CD4-positive, alpha-beta memory T cell (primary cell): ENCODE measurements at regions of chr3 and their contacts with region 1.

Region 1: DNA sequence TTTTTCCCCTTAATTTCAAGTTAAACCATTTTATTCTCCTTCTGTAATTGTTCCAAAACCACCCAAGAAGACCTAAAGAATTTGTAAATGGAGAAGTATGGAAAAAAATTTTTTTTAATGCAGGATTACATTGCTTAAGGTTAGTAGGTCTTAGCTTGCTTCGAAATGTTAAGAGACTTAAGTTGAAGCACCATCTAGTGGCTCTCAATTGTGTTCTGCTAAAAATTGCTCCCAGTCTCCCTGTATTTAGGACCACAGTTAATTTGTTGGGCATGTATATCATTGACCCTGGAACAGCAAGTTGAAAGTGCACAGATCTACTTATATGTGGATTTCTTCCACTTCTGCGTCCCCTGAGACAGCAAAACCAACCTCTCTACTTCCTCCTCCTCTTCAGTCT is 32.4 kb downstream of the CD200R1L start:
- DNase-seq: peak in 2 of 5 donors; percentile 9 to 13
- H3K4me3 ChIP-seq: no peak overlapping the region
- H3K4me3 Mint-ChIP-seq: peak overlapping the region in 1 of 8 donors; percentile 61
- H3K27ac ChIP-seq: no peak overlapping the region
- H3K27ac Mint-ChIP-seq: peak overlapping the region in 1 of 7 donors; percentile 68
- H3K4me1 ChIP-seq: peaks cover 27% of the 10 kb centered on the region
- H3K4me1 Mint-ChIP-seq: peaks cover 18 to 44% (median 32%) of the 10 kb centered on the region in 4 donors
- H3K27me3 ChIP-seq: no peaks in the 10 kb centered on the region
- H3K27me3 Mint-ChIP-seq: no peaks in the 10 kb centered on the region

Region 2: DNA sequence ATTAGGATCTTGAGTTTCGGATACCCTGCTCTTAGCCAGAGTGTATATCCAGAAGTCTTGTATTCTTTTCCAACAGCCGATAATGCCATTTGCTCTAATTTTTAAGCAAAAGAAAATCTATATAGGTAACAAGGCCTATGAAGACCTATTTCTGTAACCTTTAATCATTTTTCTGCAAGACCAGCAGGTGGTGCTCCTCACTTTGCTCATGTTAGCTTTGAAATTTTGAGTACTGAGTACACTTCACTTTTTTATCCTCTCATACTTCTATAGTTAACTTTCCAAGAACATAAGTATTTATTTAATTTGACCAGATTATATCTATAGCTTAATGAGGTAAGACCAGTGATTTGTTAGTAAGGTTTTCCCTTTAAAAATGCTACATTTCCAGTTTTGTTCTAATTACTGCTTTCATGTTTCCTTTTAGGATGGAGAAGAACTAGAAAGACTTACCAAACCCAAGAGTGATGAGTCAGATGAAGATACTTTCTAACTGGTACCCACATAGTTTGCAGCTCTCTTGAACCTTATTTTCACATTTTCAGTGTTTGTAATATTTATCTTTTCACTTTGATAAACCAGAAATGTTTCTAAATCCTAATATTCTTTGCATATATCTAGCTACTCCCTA is 231.9 kb before region 1 on chr3:
- CTCF ChIA-PET with region 1: no interaction called
- POLR2A ChIA-PET with region 1: no interaction called
- intact Hi-C with region 1: loop called (anchors 5 kb)
- DNase-seq: peak in 4 of 5 donors; percentile 19 to 27 (median 24)
- H3K4me3 ChIP-seq: no peak overlapping the region
- H3K4me3 Mint-ChIP-seq: no peak overlapping the region
- H3K27ac ChIP-seq: no peak overlapping the region
- H3K27ac Mint-ChIP-seq: peak overlapping the region in 3 of 7 donors; percentile 17 to 47 (median 36)
- H3K4me1 ChIP-seq: no peaks in the 10 kb centered on the region
- H3K4me1 Mint-ChIP-seq: peaks cover under 1 to 2% (median 2%) of the 10 kb centered on the region in 4 donors
- H3K27me3 ChIP-seq: no peaks in the 10 kb centered on the region
- H3K27me3 Mint-ChIP-seq: no peaks in the 10 kb centered on the region

Region 3: GRCh38 chr3:112773864-112774590 is 40.2 kb before region 1 on chr3:
- CTCF ChIA-PET with region 1: interaction called, 10 read pairs
- POLR2A ChIA-PET with region 1: no interaction called
- intact Hi-C with region 1: no loop called
- DNase-seq: peak; percentile 48 to 73 (median 62)
- H3K4me3 ChIP-seq: no peak overlapping the region
- H3K4me3 Mint-ChIP-seq: peak overlapping the region; percentile 51 to 79 (median 69)
- H3K27ac ChIP-seq: peak overlapping the region; percentile 18
- H3K27ac Mint-ChIP-seq: peak overlapping the region; percentile 73 to 89 (median 85)
- H3K4me1 ChIP-seq: peaks cover 68% of the 10 kb centered on the region
- H3K4me1 Mint-ChIP-seq: peaks cover 45 to 82% (median 61%) of the 10 kb centered on the region in 4 donors
- H3K27me3 ChIP-seq: no peaks in the 10 kb centered on the region
- H3K27me3 Mint-ChIP-seq: no peaks in the 10 kb centered on the region

Region 4: DNA sequence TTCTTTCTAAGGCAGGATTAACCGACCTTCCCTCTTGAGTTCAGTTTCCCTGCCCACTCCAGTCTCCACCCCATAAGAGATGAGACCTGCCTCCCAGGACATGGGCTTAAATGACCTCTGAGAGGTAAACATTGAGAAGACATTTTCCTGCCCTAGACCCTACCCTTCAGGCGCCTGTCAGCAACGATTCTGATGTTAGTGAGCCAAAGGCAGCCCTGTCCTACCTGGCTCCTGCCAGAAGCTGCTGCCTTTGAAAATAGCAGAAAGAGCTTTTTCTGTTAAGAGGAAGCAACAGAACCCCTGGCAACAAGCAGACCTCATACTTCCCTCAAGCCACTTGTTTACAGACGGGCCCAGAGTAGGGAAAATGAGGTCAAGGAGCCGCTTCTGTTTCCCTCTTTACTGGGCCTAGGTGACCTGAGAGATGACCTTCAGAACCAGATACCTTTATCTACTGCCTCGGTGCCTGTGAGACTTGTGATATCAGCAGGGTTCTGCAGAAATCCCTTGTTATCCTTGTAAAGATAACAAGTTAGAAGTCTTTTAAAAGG is 19.6 kb before region 1 on chr3:
- CTCF ChIA-PET with region 1: interaction called, 10 read pairs
- POLR2A ChIA-PET with region 1: interaction called, 3 read pairs
- intact Hi-C with region 1: loop called (anchors 2 kb)
- DNase-seq: peak in 4 of 5 donors; percentile 17 to 25 (median 22)
- H3K4me3 ChIP-seq: no peak overlapping the region
- H3K4me3 Mint-ChIP-seq: peak overlapping the region; percentile 26 to 84 (median 68)
- H3K27ac ChIP-seq: peak overlapping the region; percentile 1
- H3K27ac Mint-ChIP-seq: peak overlapping the region; percentile 46 to 94 (median 88)
- H3K4me1 ChIP-seq: peaks cover 33% of the 10 kb centered on the region
- H3K4me1 Mint-ChIP-seq: peaks cover 26 to 36% (median 31%) of the 10 kb centered on the region in 4 donors
- H3K27me3 ChIP-seq: no peaks in the 10 kb centered on the region
- H3K27me3 Mint-ChIP-seq: no peaks in the 10 kb centered on the region

Region 5: GRCh38 chr3:113685956-113686754 is 871.9 kb after region 1 on chr3:
- CTCF ChIA-PET with region 1: no interaction called
- POLR2A ChIA-PET with region 1: no interaction called
- intact Hi-C with region 1: no loop called
- DNase-seq: no peak
- H3K4me3 ChIP-seq: no peak overlapping the region
- H3K4me3 Mint-ChIP-seq: no peak overlapping the region
- H3K27ac ChIP-seq: no peak overlapping the region
- H3K27ac Mint-ChIP-seq: no peak overlapping the region
- H3K4me1 ChIP-seq: no peaks in the 10 kb centered on the region
- H3K4me1 Mint-ChIP-seq: peaks cover 0 to 13% (median 8%) of the 10 kb centered on the region in 4 donors
- H3K27me3 ChIP-seq: no peaks in the 10 kb centered on the region
- H3K27me3 Mint-ChIP-seq: no peaks in the 10 kb centered on the region